Common myeloid progenitor, CD34-positive (primary cell): ENCODE measurements at regions of chr11 and their contacts with region 1.

Region 1: DNA sequence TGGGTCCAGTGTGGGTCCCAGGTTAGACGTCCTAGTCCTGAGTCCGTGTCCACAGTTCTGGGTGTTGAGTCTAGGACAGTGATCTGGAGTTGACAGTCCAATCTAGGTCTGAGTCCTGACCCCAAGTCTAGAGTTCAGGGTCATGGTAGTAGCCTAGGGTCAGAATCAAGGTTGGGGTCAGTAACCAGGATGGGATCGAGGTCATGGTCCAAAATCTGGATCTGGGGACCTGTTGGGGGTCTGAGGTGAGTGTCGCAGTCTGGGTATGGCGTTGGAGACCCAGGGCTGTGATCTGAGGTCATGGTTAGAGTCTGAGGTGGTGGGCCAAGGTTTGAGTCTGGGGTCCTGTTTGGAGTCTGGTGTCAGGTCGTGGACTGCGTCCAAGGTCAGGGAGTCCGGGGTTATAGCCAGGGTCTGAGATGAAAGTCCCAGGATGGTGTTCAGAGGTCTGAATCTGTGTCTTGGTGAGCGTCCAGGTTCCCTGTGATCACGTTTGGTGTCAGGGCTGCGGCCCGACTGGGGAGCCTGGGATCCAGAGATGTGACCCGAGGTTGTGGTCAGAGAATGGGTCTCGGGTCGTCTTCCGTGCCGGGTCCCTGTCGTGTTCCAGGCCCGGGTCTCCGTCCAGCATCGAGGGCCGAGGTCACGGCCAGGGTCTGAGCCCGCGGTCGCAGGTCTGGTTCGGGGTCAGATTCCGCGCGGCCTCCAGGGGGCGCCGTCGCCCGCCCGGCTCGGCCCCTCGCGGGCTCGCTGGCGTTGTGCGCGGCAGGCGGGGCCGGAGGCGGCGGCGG is 445 bp upstream of the GRK2 start:
- DNase-seq: peak; percentile 63 to 75 (median 74)
- H3K4me3 ChIP-seq: peak overlapping the region in 3 of 7 experiments; percentile 11 to 98 (median 17)
- H3K27ac ChIP-seq: no peak overlapping the region
- H3K4me1 ChIP-seq: peaks cover 6 to 75% (median 73%) of the 10 kb centered on the region in 4 experiments
- H3K27me3 ChIP-seq: no peaks in the 10 kb centered on the region

Region 2: DNA sequence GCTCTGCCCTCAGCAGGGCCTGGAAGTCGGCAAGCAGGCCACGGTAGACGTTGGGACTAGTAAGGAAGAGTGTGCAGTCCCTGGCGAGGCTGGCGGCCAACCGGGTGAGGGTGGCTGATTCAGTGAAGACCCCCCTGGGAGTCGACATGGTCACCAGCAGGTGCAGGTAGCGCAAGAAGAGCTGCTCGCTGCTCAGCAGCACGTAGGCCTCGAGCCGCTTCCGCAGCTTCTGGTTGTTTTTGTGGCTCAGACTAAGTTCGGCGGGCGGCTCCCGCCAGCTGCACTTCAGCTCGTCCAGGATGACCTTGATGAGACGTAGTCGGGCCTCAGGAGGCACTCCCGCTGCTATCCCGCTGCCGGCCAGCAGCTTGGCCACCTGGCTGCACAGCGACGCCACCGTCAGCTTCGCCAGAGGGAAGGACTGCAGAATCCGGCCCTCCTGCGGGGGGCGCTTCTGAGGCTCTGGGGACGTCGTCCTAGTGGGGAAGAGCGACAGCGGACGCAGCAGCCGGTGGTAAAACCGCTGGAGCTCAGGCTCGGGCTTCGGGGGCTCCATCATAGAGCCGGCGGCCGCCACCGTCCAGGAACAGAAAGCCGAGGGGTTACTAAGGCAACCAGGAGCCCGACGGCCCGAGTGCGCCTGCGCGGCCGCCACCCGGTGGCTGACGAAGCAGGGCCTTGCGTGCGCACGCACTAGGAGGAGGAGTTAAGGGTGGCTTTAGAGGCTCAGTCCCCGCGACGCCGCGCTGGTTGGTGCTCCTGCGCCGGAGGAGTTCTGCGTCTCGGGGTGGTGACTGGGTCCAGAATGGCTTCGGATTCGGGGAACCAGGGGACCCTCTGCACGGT is 673.1 kb before region 1 on chr11 and contains the starts of genes CCDC87 and CCS:
- CTCF ChIA-PET with region 1: no interaction called
- POLR2A ChIA-PET with region 1: no interaction called
- DNase-seq: peak; percentile 97 to 98 (median 97)
- H3K4me3 ChIP-seq: peak within 1 kb of the TSS; percentile 49 to 96 (median 85)
- H3K27ac ChIP-seq: peak within 1 kb of the TSS; percentile 85 to 88
- H3K4me1 ChIP-seq: peaks cover 8 to 42% (median 35%) of the 10 kb centered on the region in 4 experiments
- H3K27me3 ChIP-seq: no peaks in the 10 kb centered on the region

Region 3: DNA sequence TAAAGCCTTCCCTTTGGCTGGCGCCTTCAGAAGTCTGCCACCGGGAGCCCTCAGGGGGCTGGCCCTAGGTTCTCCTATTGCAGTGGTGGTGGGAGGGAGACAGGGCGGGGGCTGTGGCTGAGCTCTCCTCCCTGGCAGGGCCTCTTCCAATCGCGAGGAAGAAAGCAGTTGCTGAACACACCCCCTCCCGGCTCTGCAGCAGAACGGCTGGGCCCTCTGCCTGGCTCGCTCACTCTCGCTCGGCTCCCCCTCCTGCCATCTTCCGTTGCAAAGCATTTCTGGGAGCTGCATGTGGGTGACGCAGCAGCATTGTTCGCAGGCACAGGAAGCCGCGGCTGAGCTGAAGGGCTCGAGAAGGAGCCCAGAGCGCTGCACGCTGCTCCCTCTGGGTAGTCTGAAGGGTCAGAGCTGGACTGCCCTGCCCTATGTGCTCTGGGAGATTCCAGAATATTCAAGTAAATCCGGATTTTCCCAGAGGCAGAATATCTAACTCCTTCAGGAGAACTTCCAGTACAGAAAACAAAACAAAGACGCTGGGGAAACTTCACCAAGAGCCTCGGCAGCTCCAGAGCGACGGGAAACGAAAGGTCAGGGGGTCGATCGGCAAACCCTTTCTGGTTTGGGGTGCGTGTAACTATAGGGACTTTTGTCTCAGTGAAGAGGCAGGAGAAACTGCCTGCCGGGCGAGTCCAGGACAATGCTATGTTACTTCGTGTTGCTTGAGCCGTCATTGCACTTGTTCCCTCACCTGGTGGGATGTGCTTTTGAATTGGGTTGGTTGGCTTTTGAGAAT is 25.8 kb before region 1 on chr11:
- CTCF ChIA-PET with region 1: interaction called, 24 read pairs
- POLR2A ChIA-PET with region 1: interaction called, 6 read pairs
- DNase-seq: peak; percentile 99 to 100 (median 99)
- H3K4me3 ChIP-seq: peak overlapping the region; percentile 42 to 99 (median 97)
- H3K27ac ChIP-seq: peak overlapping the region; percentile 99
- H3K4me1 ChIP-seq: peaks cover 14 to 43% (median 39%) of the 10 kb centered on the region in 4 experiments
- H3K27me3 ChIP-seq: no peaks in the 10 kb centered on the region

Region 4: DNA sequence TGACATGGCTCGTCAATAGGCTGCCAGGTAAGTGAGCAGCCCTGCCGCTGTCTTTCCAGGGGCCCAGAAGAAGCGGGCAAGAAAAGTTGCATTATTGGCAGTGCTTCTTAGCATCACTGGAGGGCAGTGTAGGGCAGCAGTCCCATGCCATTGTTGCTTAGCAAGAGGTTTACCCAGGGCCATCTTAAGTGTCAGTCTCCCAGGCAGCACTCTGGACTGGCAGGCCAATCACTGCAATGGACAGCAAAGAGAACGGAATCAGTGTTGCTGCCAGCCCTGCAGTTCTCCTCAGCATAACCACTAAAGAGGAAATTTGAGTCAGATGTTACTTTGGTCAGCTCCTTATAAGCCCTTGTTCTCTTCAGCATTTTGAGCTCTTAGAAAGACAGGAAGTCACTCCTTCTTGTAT is 13.0 kb before region 1 on chr11:
- CTCF ChIA-PET with region 1: interaction called, 59 read pairs
- POLR2A ChIA-PET with region 1: interaction called, 4 read pairs
- DNase-seq: peak; percentile 71 to 88 (median 87)
- H3K4me3 ChIP-seq: no peak overlapping the region
- H3K27ac ChIP-seq: no peak overlapping the region
- H3K4me1 ChIP-seq: peaks cover 0 to 8% (median 3%) of the 10 kb centered on the region in 4 experiments
- H3K27me3 ChIP-seq: no peaks in the 10 kb centered on the region

Region 5: DNA sequence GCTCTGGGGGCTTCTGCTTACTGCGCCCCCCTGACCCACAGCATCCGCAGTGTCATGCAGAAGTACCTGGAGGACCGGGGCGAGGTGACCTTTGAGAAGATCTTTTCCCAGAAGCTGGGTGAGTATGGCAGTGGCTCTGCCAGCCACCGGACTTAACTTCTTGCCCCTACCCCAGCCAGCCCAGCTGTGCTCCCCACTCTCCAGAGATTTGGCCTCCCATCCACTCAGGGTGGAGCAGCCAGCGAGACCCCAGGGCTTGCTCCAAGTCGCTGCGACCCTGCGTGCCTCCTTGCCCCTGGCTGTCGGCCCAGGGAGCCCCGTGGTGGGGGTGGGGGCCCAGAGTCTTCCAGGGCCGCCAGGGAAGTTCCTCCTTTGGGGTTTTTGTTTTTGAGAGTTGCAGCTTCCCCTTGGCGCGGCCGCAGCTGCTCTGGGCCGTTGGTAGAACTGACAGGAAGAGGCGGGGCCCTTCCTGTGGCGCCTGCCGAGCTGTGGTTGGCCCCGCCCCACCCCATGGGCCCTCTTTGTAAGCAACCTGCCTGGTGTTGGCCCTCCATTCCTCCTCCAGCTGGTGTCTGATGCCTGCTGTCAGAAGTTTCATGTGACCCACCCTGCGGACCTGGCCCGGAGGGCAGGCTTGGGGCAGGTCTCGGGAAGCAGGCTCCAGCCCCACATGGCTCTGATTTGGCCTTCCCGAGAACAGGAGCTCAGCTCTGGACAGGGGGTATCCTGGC is 11.6 kb after region 1 on chr11:
- CTCF ChIA-PET with region 1: interaction called, 69 read pairs
- POLR2A ChIA-PET with region 1: interaction called, 58 read pairs
- DNase-seq: peak; percentile 98 to 100 (median 99)
- H3K4me3 ChIP-seq: peak overlapping the region in 6 of 7 experiments; percentile 26 to 69 (median 54)
- H3K27ac ChIP-seq: peak overlapping the region; percentile 96 to 97
- H3K4me1 ChIP-seq: peaks cover 6 to 99% (median 98%) of the 10 kb centered on the region in 4 experiments
- H3K27me3 ChIP-seq: no peaks in the 10 kb centered on the region

Region 6: DNA sequence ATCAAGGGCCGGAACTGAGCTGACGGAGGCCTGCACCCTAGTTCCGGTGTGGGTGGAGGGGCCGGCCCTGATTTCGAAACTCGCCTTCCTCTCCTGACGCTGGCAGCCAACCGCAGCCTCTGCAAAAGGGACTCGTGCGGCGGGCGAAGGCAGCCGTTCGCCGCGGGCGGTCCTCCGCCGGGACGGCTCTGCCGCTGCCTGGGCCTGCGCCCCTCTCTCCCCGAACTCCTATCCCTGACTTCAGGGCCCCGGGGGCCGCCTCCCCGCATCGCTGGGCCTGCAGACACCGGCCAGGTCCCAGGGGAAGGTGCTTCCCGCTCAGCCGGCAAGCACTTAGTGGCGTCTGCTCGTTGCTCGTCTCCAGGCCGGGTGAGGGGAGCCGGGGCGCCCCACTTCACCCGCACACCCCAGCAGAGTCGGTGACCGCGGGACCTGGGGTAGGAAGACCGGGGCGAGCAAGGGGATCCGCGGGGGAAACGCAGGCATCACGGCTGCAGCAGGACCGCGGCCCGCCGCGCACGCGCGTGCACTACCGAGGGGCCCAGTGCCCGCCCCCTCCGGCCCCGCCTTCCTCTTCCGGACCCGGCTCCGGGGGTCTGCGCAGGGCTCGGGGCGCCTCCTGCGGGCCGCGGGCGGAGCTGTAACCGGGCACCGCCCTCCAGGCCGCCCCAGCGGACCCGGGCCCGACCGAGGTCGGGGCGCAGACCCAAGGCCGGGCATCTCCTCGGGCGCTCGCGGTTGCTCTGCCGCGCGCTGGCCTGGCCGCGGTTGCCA is 22.8 kb after region 1 on chr11:
- CTCF ChIA-PET with region 1: interaction called, 64 read pairs
- POLR2A ChIA-PET with region 1: interaction called, 147 read pairs
- DNase-seq: peak; percentile 95 to 97 (median 97)
- H3K4me3 ChIP-seq: peak overlapping the region; percentile 48 to 81 (median 64)
- H3K27ac ChIP-seq: peak overlapping the region; percentile 90 to 97
- H3K4me1 ChIP-seq: peaks cover 0 to 78% (median 68%) of the 10 kb centered on the region in 4 experiments
- H3K27me3 ChIP-seq: no peaks in the 10 kb centered on the region

Region 7: GRCh38 chr11:67303132-67303834 is 37.5 kb after region 1 on chr11 and contains the start of gene SSH3:
- CTCF ChIA-PET with region 1: interaction called, 35 read pairs
- POLR2A ChIA-PET with region 1: interaction called, 7 read pairs
- DNase-seq: peak in 2 of 3 donors; percentile 42 to 59
- H3K4me3 ChIP-seq: peak within 1 kb of the TSS; percentile 65 to 88 (median 78)
- H3K27ac ChIP-seq: peak within 1 kb of the TSS in 1 of 2 experiments; percentile 64
- H3K4me1 ChIP-seq: peaks cover 0 to 33% (median 24%) of the 10 kb centered on the region in 4 experiments
- H3K27me3 ChIP-seq: no peaks in the 10 kb centered on the region

Region 8: GRCh38 chr11:67382276-67383136 is 116.7 kb after region 1 on chr11:
- CTCF ChIA-PET with region 1: interaction called, 33 read pairs
- POLR2A ChIA-PET with region 1: no interaction called
- DNase-seq: peak; percentile 70 to 82 (median 73)
- H3K4me3 ChIP-seq: no peak overlapping the region
- H3K27ac ChIP-seq: no peak overlapping the region
- H3K4me1 ChIP-seq: peaks cover 0 to 46% (median 29%) of the 10 kb centered on the region in 4 experiments
- H3K27me3 ChIP-seq: no peaks in the 10 kb centered on the region

Region 9: DNA sequence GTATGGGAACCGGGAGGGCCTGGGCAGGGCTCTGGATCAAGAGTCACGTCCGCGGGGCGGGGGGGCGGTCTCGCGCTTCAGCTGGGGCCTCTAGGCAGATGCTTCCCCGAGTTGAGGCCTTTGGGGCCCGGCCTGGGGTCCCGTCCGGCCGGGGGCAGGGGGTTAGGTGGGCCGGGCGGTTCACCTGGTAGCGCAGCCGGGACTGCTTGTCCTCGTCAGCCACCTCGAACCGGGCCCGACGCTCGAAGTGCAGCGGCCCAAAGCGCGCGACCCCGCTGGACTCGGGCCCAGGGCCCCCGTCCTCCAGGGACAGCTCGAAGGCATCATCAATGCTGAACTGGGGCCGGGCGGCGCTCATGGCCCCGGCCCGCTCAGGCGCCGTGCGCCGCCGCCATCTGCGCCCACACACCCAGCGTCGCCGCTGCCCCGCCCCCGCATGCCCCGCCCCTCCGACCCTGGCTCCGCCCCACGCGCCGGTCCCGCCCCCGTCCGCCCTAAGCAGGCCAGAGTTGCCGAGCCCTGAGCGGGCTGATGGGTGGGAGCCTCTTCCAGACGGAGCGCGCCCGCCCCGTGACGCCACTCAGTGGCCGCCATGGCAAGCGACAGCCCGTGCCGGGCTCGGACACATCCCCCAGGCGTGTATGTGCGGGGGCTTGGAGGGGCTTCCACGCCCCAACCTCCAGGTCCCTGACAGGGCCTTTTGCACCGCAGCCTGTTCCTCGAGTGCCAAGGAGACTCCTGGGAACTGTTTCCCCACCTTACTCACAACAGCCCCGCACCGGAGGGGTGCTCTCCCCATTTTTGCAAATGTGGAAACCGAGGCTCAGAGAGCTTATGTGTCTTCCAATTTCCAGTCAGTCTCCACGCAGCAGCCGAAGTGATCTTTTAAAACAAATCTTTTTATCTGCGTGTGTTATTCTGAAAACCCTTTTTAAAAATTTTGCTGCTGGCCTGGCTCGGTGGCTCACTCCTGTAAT is 203.3 kb after region 1 on chr11 and contains the start of gene TMEM134:
- CTCF ChIA-PET with region 1: no interaction called
- POLR2A ChIA-PET with region 1: no interaction called
- DNase-seq: peak; percentile 93 to 95 (median 94)
- H3K4me3 ChIP-seq: peak within 1 kb of the TSS; percentile 59 to 88 (median 80)
- H3K27ac ChIP-seq: peak within 1 kb of the TSS; percentile 33 to 68
- H3K4me1 ChIP-seq: peaks cover 3 to 40% (median 27%) of the 10 kb centered on the region in 4 experiments
- H3K27me3 ChIP-seq: no peaks in the 10 kb centered on the region